Mammary epithelial cell (primary cell): ENCODE measurements at regions of chr18 and their contacts with region 1.

Region 1: DNA sequence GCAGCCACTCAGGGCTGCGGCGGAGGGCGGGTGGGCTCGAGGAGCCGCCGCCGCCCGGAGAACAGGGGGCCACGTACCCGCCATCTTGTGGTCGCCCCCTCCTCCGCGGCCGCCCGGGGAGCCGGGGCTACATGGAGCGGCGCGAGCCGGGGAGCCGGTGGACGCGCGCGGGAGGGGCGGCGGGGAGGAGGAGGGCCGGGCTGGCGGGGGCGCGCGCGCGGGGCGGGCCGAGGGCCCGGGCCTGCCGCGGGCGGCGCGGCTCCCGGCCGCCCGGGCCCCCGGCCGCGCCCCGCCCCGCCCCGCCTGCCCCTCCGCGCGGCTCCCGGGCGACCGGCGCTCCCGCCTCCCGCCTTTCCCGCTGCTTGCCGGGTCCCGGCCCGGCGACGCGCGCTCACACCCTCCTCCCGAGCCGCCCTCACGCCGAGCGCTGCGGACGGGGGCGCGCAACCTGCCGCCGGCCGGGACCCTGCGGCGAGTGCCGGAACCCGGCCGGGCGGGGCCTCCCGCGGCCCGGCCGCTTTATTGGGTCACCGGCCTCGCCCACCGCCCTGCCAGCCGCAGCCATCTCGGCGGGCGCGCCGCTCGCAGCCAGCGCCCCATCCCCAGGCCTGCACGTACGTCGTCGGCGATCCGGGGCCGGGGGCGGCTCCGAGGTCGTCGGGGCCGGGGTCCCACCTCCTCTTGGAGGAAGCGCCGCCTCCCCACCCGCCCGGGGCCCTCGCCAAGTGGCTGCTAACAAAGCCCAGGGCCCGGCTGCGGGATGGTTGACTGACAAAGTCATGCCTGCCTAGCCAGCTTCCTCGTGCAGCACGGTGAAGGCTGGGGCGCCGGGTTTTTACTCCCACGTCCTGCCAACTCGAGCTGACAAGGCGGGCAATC is at the start of gene PPP4R1:
- DNase-seq: peak; percentile 76
- H3K4me3 ChIP-seq: peak within 1 kb of the TSS; percentile 50 to 99 (median 90)
- H3K27ac ChIP-seq: peak within 1 kb of the TSS; percentile 95
- H3K4me1 ChIP-seq: peaks cover 41% of the 10 kb centered on the region
- H3K27me3 ChIP-seq: no peaks in the 10 kb centered on the region
- CTCF ChIP-seq: no peak
- total RNA-seq, gene PPP4R1: 89.7 to 163 TPM

Region 2: GRCh38 chr18:8536226-8536625 is 1078.4 kb before region 1 on chr18:
- CTCF ChIA-PET with region 1: no interaction called
- dilution Hi-C with region 1: no loop called
- in situ Hi-C with region 1: no loop called
- intact Hi-C with region 1: no loop called
- DNase-seq: peak; percentile 6
- H3K4me3 ChIP-seq: no peak overlapping the region
- H3K27ac ChIP-seq: no peak overlapping the region
- H3K4me1 ChIP-seq: no peaks in the 10 kb centered on the region
- H3K27me3 ChIP-seq: no peaks in the 10 kb centered on the region
- CTCF ChIP-seq: no peak

Region 3: DNA sequence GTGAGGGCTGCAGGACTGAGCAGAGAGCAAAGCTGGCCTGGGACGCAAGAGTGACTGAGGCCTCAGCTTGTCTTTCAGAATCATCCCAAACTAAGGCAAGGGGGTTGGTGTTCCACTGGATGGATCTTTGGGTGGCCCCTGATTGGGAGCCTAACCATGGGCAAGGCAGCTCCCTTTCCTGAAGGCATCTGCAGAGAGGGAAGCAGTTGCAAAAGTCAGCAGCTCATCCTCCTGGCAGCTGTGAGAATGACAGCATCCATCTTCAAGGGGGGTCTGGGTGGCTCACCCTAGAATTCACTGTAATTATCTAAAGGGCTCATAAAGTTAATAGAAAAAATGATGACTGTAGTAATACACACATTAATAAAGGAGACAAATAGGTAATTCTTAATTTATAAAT is 46.9 kb after region 1 on chr18:
- CTCF ChIA-PET with region 1: interaction called, 5 read pairs
- dilution Hi-C with region 1: loop called (anchors 5 kb)
- in situ Hi-C with region 1: loop called in 1 of 2 experiments (anchors 5 kb)
- intact Hi-C with region 1: loop called (anchors 1 kb)
- DNase-seq: no peak
- H3K4me3 ChIP-seq: no peak overlapping the region
- H3K27ac ChIP-seq: no peak overlapping the region
- H3K4me1 ChIP-seq: peaks cover 27% of the 10 kb centered on the region
- H3K27me3 ChIP-seq: no peaks in the 10 kb centered on the region
- CTCF ChIP-seq: peak; percentile 21 to 54

Region 4: GRCh38 chr18:9711361-9712129 is 96.9 kb after region 1 on chr18:
- CTCF ChIA-PET with region 1: no interaction called
- dilution Hi-C with region 1: loop called (anchors 5 kb)
- in situ Hi-C with region 1: no loop called
- intact Hi-C with region 1: no loop called
- DNase-seq: no peak
- H3K4me3 ChIP-seq: no peak overlapping the region
- H3K27ac ChIP-seq: no peak overlapping the region
- H3K4me1 ChIP-seq: peaks cover 15% of the 10 kb centered on the region
- H3K27me3 ChIP-seq: no peaks in the 10 kb centered on the region
- CTCF ChIP-seq: no peak

Region 5: DNA sequence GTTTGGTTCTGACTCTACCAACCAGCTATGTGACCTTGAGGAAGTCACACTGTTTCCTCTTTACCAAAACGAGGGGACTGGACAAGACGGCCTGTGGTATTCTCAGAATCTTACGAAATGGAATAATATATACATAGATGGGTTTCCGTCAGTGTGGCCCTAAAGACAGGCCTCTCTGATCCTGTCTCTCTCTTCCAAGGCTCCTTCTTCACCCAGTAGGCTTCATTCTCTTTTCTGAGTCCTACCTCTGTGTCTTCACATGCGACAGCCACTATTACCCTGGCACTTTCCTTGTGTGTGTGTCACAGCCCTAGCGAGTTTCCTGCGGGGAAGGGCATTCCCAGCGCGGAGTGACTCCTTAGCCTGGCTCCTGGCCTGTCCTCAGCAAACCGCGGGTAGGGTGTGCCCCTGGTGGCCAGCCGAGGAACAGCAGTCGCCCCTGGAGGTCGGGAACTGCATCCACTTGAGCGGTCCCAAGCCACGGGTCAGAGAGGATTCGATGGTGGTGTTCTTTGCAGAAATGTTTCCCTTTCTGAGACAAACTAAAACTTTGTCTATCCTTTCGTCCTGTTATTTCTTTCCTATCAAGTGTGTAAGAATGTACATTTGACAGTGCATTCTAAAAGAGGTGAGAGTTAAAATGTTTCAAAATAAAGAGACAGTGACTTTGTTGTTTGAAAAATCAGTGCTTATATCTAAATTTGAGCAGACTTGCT is 156.8 kb after region 1 on chr18:
- CTCF ChIA-PET with region 1: no interaction called
- dilution Hi-C with region 1: no loop called
- in situ Hi-C with region 1: no loop called
- intact Hi-C with region 1: loop called (anchors 2 kb)
- DNase-seq: peak; percentile 37
- H3K4me3 ChIP-seq: no peak overlapping the region
- H3K27ac ChIP-seq: no peak overlapping the region
- H3K4me1 ChIP-seq: no peaks in the 10 kb centered on the region
- H3K27me3 ChIP-seq: no peaks in the 10 kb centered on the region
- CTCF ChIP-seq: peak; percentile 87 to 89

Region 6: GRCh38 chr18:9951022-9951859 is 336.6 kb after region 1 on chr18:
- CTCF ChIA-PET with region 1: no interaction called
- dilution Hi-C with region 1: no loop called
- in situ Hi-C with region 1: no loop called
- intact Hi-C with region 1: loop called (anchors 5 kb)
- DNase-seq: peak; percentile 46
- H3K4me3 ChIP-seq: no peak overlapping the region
- H3K27ac ChIP-seq: no peak overlapping the region
- H3K4me1 ChIP-seq: peaks cover 28% of the 10 kb centered on the region
- H3K27me3 ChIP-seq: no peaks in the 10 kb centered on the region
- CTCF ChIP-seq: peak; percentile 81 to 83